Caco-2 (cell line): ENCODE measurements at regions of chr2 and their contacts with region 1.

Region 1: DNA sequence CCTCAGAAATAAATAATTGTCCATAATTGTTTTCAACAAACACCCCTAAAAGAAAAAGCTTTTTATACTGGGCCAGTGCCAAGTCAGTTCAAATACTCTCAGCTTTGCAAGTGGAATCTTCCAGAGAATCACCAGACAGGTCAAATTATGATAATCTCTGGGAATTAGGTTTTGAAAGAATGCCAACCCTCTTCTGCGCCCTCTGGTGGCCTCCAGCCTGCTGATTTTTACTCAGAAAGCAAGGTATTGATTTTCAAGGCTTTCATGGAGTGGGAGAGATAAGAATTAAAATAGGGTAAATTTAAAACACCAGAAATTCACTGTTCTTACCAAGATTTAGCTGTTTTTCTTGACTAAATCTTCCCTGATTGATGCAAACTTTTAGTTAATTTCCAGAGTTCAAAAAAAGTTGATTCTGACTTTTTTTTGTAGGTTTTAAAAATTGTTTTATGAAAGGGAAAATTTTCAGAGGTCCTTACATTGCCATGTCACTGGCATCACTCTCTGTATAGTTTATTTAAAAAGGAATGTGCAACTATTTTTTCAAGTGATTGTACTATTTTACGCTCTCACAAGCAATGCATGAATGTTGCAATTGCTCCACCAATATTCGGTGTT is 282.9 kb upstream of the TNP1 start:
- DNase-seq: peak; percentile 51 to 69
- H3K4me3 ChIP-seq: no peak overlapping the region
- H3K4me3 Mint-ChIP-seq: no peak overlapping the region
- H3K27ac Mint-ChIP-seq: no peak overlapping the region
- H3K4me1 ChIP-seq: no peaks in the 10 kb centered on the region
- H3K4me1 Mint-ChIP-seq: no peaks in the 10 kb centered on the region
- H3K27me3 ChIP-seq: no peaks in the 10 kb centered on the region
- H3K27me3 Mint-ChIP-seq: peaks cover 7% of the 10 kb centered on the region
- CTCF ChIP-seq: peak; percentile 67 to 86

Region 2: GRCh38 chr2:217000404-217000803 is 142.4 kb before region 1 on chr2:
- CTCF ChIA-PET with region 1: no interaction called
- POLR2A ChIA-PET with region 1: no interaction called
- intact Hi-C with region 1: loop called (anchors 1 kb)
- DNase-seq: no peak
- H3K4me3 ChIP-seq: no peak overlapping the region
- H3K4me3 Mint-ChIP-seq: no peak overlapping the region
- H3K27ac Mint-ChIP-seq: no peak overlapping the region
- H3K4me1 ChIP-seq: no peaks in the 10 kb centered on the region
- H3K4me1 Mint-ChIP-seq: no peaks in the 10 kb centered on the region
- H3K27me3 ChIP-seq: no peaks in the 10 kb centered on the region
- H3K27me3 Mint-ChIP-seq: peaks cover 6% of the 10 kb centered on the region
- CTCF ChIP-seq: peak in 1 of 2 experiments; percentile 9

Region 3: GRCh38 chr2:217199255-217199630 is 56.5 kb after region 1 on chr2:
- CTCF ChIA-PET with region 1: no interaction called
- POLR2A ChIA-PET with region 1: no interaction called
- intact Hi-C with region 1: no loop called
- DNase-seq: no peak
- H3K4me3 ChIP-seq: no peak overlapping the region
- H3K4me3 Mint-ChIP-seq: no peak overlapping the region
- H3K27ac Mint-ChIP-seq: no peak overlapping the region
- H3K4me1 ChIP-seq: no peaks in the 10 kb centered on the region
- H3K4me1 Mint-ChIP-seq: peaks cover 2% of the 10 kb centered on the region
- H3K27me3 ChIP-seq: no peaks in the 10 kb centered on the region; the same call in 1 of the 2 replicates
- H3K27me3 Mint-ChIP-seq: peaks cover 12% of the 10 kb centered on the region
- CTCF ChIP-seq: no peak

Region 4: GRCh38 chr2:217434181-217434975 is 291.6 kb after region 1 on chr2:
- CTCF ChIA-PET with region 1: no interaction called
- POLR2A ChIA-PET with region 1: no interaction called
- intact Hi-C with region 1: no loop called
- DNase-seq: peak; percentile 65 to 75
- H3K4me3 ChIP-seq: no peak overlapping the region
- H3K4me3 Mint-ChIP-seq: no peak overlapping the region
- H3K27ac Mint-ChIP-seq: no peak overlapping the region
- H3K4me1 ChIP-seq: peaks cover 14% of the 10 kb centered on the region
- H3K4me1 Mint-ChIP-seq: peaks cover 27% of the 10 kb centered on the region
- H3K27me3 ChIP-seq: no peaks in the 10 kb centered on the region
- H3K27me3 Mint-ChIP-seq: no peaks in the 10 kb centered on the region
- CTCF ChIP-seq: no peak